ENCODE measurements at regions of chr6 and their contacts with region 1.

Region 1: DNA sequence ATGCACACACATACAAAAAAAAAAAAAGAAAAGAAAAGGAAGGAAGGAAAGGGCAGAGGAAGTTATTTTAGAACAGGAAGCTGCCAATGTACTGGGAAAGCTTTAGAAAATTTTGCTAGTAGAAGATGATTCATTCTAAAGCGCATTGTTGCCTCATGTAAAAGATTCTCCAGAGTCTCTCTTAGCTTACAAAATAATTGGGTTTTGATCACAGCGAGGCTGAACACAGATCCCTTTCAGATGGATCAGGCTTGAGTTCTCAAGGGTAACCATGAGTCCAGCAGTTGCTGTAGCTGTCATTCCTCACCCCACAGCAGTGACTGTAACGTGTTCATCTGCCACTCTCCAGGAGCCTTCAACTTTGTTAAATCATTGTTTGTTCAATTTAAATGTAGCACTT is 81.9 kb downstream of the PHACTR2 start:
- DNase-seq: no peak
- H3K4me3 Mint-ChIP-seq: no peak overlapping the region
- H3K27ac Mint-ChIP-seq: no peak overlapping the region
- H3K4me1 Mint-ChIP-seq: peaks cover 15% of the 10 kb centered on the region
- H3K27me3 Mint-ChIP-seq: no peaks in the 10 kb centered on the region

Region 2: GRCh38 chr6:143705569-143705968 is 54.1 kb before region 1 on chr6:
- CTCF ChIA-PET with region 1: no interaction called
- intact Hi-C with region 1: loop called (anchors 2 kb)
- DNase-seq: no peak
- H3K4me3 Mint-ChIP-seq: no peak overlapping the region
- H3K27ac Mint-ChIP-seq: no peak overlapping the region
- H3K4me1 Mint-ChIP-seq: no peaks in the 10 kb centered on the region
- H3K27me3 Mint-ChIP-seq: no peaks in the 10 kb centered on the region

Measured in activated naive CD4-positive, alpha-beta T cell treated with anti-CD3 and anti-CD28 coated beads for 36 hours (primary cell).